ENCODE measurements at regions of chr7 and their contacts with region 1.

Region 1: GRCh38 chr7:1767524-1767923 is 97.4 kb downstream of the ELFN1 start:
- DNase-seq: no peak
- H3K4me3 ChIP-seq: no peak overlapping the region
- H3K27ac ChIP-seq: no peak overlapping the region
- H3K4me1 ChIP-seq: no peaks in the 10 kb centered on the region
- H3K27me3 ChIP-seq: 0 out of 7 replicates have a peak, but pooled peaks cover 0 to 3% (median 0%) of the 10 kb centered on the region in 4 experiments
- CTCF ChIP-seq: peak; percentile 71 to 91 (median 78)
- EP300 ChIP-seq: no peak
- POLR2A ChIP-seq: no peak
- RAD21 ChIP-seq: peak; percentile 66 to 78

Region 2: GRCh38 chr7:1647961-1648672 is 119.4 kb before region 1 on chr7:
- CTCF ChIA-PET with region 1: interaction called, 10 read pairs
- POLR2A ChIA-PET with region 1: no interaction called
- DNase-seq: peak in 1 of 2 experiments; percentile 54
- H3K4me3 ChIP-seq: no peak overlapping the region
- H3K27ac ChIP-seq: no peak overlapping the region
- H3K4me1 ChIP-seq: peaks cover 0 to 3% (median 0%) of the 10 kb centered on the region in 4 experiments; a peak in 2 of 7 replicates
- H3K27me3 ChIP-seq: no peaks in the 10 kb centered on the region; a peak in 1 of 7 replicates
- CTCF ChIP-seq: no peak
- EP300 ChIP-seq: no peak
- POLR2A ChIP-seq: no peak
- RAD21 ChIP-seq: no peak

Region 3: GRCh38 chr7:1664711-1665548 is 102.6 kb before region 1 on chr7:
- CTCF ChIA-PET with region 1: interaction called, 11 read pairs
- POLR2A ChIA-PET with region 1: no interaction called
- DNase-seq: peak in 1 of 2 experiments; percentile 93
- H3K4me3 ChIP-seq: peak overlapping the region; percentile 26 to 77 (median 36)
- H3K27ac ChIP-seq: no peak overlapping the region
- H3K4me1 ChIP-seq: peaks cover 0 to 27% (median 15%) of the 10 kb centered on the region in 4 experiments; a peak in 5 of 7 replicates
- H3K27me3 ChIP-seq: peaks cover 57 to 76% (median 72%) of the 10 kb centered on the region in 4 experiments
- CTCF ChIP-seq: peak in 2 of 3 experiments; percentile 68 to 99; a peak in 3 of 4 replicates
- EP300 ChIP-seq: peak in 1 of 2 experiments; percentile 16; a peak in 1 of 3 replicates
- POLR2A ChIP-seq: no peak
- RAD21 ChIP-seq: peak; percentile 71 to 84

Region 4: GRCh38 chr7:1781369-1781768 is 13.8 kb after region 1 on chr7:
- CTCF ChIA-PET with region 1: interaction called, 10 read pairs
- POLR2A ChIA-PET with region 1: no interaction called
- DNase-seq: no peak
- H3K4me3 ChIP-seq: no peak overlapping the region
- H3K27ac ChIP-seq: no peak overlapping the region
- H3K4me1 ChIP-seq: no peaks in the 10 kb centered on the region
- H3K27me3 ChIP-seq: no peaks in the 10 kb centered on the region
- CTCF ChIP-seq: no peak
- EP300 ChIP-seq: no peak
- POLR2A ChIP-seq: no peak
- RAD21 ChIP-seq: no peak

Region 5: GRCh38 chr7:1807821-1808600 is 40.5 kb after region 1 on chr7:
- CTCF ChIA-PET with region 1: interaction called, 10 read pairs
- POLR2A ChIA-PET with region 1: no interaction called
- DNase-seq: no peak
- H3K4me3 ChIP-seq: no peak overlapping the region
- H3K27ac ChIP-seq: no peak overlapping the region
- H3K4me1 ChIP-seq: peaks cover 0 to 1% (median 0%) of the 10 kb centered on the region in 4 experiments; a peak in 1 of 7 replicates
- H3K27me3 ChIP-seq: no peaks in the 10 kb centered on the region; a peak in 1 of 7 replicates
- CTCF ChIP-seq: no peak
- EP300 ChIP-seq: no peak
- POLR2A ChIP-seq: no peak
- RAD21 ChIP-seq: no peak

Region 6: DNA sequence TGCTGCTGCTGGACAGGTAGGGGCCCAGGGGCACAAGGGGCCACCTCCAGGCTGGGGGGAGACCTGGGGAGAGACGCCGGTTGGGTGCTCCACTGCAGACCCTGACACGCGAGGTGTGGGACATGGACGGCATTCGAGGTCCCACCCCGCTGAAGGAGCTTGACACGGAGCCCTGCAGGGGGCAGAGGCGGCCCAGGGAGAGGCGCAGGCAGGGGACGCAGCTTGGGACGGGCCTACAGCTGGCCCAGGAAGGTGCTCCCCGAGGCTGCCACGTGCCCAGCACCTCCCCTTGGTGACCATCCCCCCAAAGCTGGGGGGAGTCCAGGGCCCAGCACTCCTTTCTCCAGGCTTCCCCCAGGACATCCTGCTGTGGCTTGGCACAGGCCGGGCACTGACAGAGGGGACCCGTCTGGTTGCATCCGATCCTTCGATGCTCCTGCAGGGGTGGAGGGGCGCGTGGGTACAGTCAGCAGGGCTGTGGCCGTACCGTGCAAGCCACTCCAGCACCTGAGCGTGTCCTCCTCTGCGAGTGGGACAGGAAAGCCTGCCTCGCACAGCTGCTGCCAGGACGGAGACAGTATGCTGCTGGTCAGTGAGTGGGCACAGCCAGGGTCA is 76.9 kb after region 1 on chr7:
- CTCF ChIA-PET with region 1: no interaction called
- POLR2A ChIA-PET with region 1: no interaction called
- DNase-seq: no peak
- H3K4me3 ChIP-seq: no peak overlapping the region
- H3K27ac ChIP-seq: no peak overlapping the region; the same call in 1 of the 2 replicates
- H3K4me1 ChIP-seq: no peaks in the 10 kb centered on the region; a peak in 1 of 7 replicates
- H3K27me3 ChIP-seq: no peaks in the 10 kb centered on the region
- CTCF ChIP-seq: no peak
- EP300 ChIP-seq: no peak
- POLR2A ChIP-seq: no peak
- RAD21 ChIP-seq: no peak

Measured in H1 (cell line).